ENCODE measurements at regions of chr19 and their contacts with region 1.

Region 1: DNA sequence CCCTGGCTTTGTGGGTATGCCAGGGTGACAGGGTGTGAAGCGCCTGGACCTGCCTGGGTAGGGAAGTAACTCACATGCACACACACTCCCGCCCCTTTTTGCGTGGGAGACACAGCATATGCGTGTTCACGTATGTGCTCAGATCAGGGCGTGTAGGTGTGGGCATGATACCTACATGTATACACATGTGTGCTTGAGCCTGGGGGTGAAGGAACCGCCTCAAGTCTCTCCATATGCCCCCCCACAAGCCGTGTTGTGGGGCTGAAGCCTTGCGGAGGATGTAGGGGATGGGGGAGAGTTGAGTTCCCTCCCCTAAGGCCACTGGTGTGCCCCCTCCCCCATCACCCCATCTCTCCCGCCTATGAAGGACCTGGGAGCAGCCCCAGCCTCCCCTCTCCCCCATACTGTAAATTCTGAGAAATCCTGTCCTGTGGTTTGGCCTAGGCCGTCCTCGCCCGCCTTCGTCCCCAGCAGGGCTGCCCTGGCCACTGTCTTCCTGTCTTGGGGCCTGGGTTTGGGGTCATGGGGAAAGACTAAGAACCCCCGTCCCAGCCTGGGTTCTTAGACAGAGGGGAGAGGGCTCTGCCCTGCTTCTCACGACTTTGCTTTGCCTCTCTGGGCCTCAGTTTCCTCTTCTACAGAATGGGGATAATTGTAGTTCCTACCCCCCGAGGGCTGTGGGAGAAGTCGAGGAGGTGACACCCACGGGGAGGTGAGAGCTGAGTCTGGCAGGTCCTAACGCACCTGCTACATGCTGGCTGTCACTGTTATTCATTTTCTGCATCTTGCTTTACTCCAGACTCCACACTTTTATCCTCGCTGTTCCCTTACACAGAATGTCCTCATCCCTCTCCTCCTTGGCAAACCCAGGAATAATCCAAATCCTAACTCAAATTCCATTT is 14.3 kb downstream of the ACTL9 start:
- DNase-seq: no peak
- ATAC-seq: no peak
- H3K4me3 ChIP-seq: no peak overlapping the region
- H3K27ac ChIP-seq: no peak overlapping the region
- H3K4me1 ChIP-seq: no peaks in the 10 kb centered on the region
- CTCF ChIP-seq: no peak
- EP300 ChIP-seq: no peak
- POLR2A ChIP-seq: no peak
- RAD21 ChIP-seq: no peak

Region 2: GRCh38 chr19:8311461-8312376 is 372.5 kb before region 1 on chr19:
- CTCF ChIA-PET with region 1: no interaction called
- POLR2A ChIA-PET with region 1: no interaction called
- DNase-seq: no peak
- ATAC-seq: no peak
- H3K4me3 ChIP-seq: no peak overlapping the region
- H3K27ac ChIP-seq: no peak overlapping the region
- H3K4me1 ChIP-seq: peaks cover 16% of the 10 kb centered on the region
- CTCF ChIP-seq: no peak
- EP300 ChIP-seq: no peak
- POLR2A ChIP-seq: no peak
- RAD21 ChIP-seq: no peak

Region 3: DNA sequence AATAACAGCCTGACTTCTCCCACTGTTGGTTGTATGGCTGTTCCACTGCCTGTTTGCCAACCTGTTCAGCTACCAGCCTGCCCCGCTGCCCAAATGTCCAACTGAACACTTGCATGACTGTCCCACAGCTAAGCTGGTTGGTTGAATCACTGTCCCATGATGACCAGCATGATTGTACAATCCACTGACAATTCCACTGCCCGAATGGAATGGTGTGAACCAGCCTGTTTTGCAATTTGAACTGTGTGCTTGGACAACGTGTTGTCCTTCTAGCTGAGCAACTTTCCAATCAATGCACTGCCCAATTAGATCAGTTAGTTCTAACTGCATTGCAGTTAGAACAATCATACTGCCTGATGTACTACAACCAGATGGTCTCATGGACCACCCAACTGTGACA is 82.5 kb before region 1 on chr19:
- CTCF ChIA-PET with region 1: no interaction called
- POLR2A ChIA-PET with region 1: no interaction called
- DNase-seq: no peak
- ATAC-seq: no peak
- H3K4me3 ChIP-seq: no peak overlapping the region
- H3K27ac ChIP-seq: no peak overlapping the region; a peak in 1 of 6 replicates
- H3K4me1 ChIP-seq: peaks cover 14% of the 10 kb centered on the region; the same call in 2 of the 3 replicates
- CTCF ChIP-seq: no peak
- EP300 ChIP-seq: no peak
- POLR2A ChIP-seq: no peak
- RAD21 ChIP-seq: no peak

Region 4: GRCh38 chr19:8697671-8698432 is 13.6 kb after region 1 on chr19:
- CTCF ChIA-PET with region 1: interaction called, 11 read pairs
- POLR2A ChIA-PET with region 1: no interaction called
- DNase-seq: no peak
- ATAC-seq: no peak
- H3K4me3 ChIP-seq: no peak overlapping the region
- H3K27ac ChIP-seq: no peak overlapping the region
- H3K4me1 ChIP-seq: 0 out of 3 replicates have a peak, but pooled peaks cover 2% of the 10 kb centered on the region
- CTCF ChIP-seq: 0 out of 3 replicates have a peak, but pooled peaks have one; percentile 12
- EP300 ChIP-seq: no peak
- POLR2A ChIP-seq: no peak
- RAD21 ChIP-seq: 0 out of 5 replicates have a peak, but pooled peaks of 1 of the 2 experiments have one; percentile 16